ENCODE measurements at regions of chr13 and their contacts with region 1.

Region 1: GRCh38 chr13:112873851-112874750 is 94.9 kb upstream of the MCF2L start:
- DNase-seq: peak; percentile 73 to 75 (median 74)
- ATAC-seq: peak; percentile 99
- H3K4me3 ChIP-seq: no peak overlapping the region
- H3K27ac ChIP-seq: no peak overlapping the region
- H3K4me1 ChIP-seq: peaks cover 0 to 19% of the 10 kb centered on the region in 2 experiments; a peak in 2 of 5 replicates
- H3K27me3 ChIP-seq: no peaks in the 10 kb centered on the region
- CTCF ChIP-seq: peak; percentile 78 to 84 (median 82)
- EP300 ChIP-seq: no peak
- POLR2A ChIP-seq: no peak
- RAD21 ChIP-seq: peak; percentile 64 to 78

Region 2: GRCh38 chr13:112443995-112444860 is 429.9 kb before region 1 on chr13:
- CTCF ChIA-PET with region 1: no interaction called
- POLR2A ChIA-PET with region 1: no interaction called
- in situ Hi-C with region 1: no loop called
- intact Hi-C with region 1: loop called (anchors 5 kb)
- DNase-seq: peak; percentile 65 to 70 (median 70)
- ATAC-seq: peak; percentile 95
- H3K4me3 ChIP-seq: no peak overlapping the region
- H3K27ac ChIP-seq: no peak overlapping the region
- H3K4me1 ChIP-seq: peaks cover 0 to 7% of the 10 kb centered on the region in 2 experiments; a peak in 1 of 5 replicates
- H3K27me3 ChIP-seq: peaks cover 17 to 49% of the 10 kb centered on the region in 2 experiments; a peak in 4 of 5 replicates
- CTCF ChIP-seq: peak; percentile 84 to 87 (median 85)
- EP300 ChIP-seq: no peak
- POLR2A ChIP-seq: no peak
- RAD21 ChIP-seq: peak; percentile 66 to 84

Region 3: GRCh38 chr13:112616586-112617362 is 257.3 kb before region 1 on chr13:
- CTCF ChIA-PET with region 1: no interaction called
- POLR2A ChIA-PET with region 1: interaction called, 3 read pairs
- in situ Hi-C with region 1: no loop called
- intact Hi-C with region 1: loop called (anchors 5 kb)
- DNase-seq: peak; percentile 34 to 60 (median 58)
- ATAC-seq: peak; percentile 90
- H3K4me3 ChIP-seq: no peak overlapping the region
- H3K27ac ChIP-seq: no peak overlapping the region
- H3K4me1 ChIP-seq: no peaks in the 10 kb centered on the region; a peak in 1 of 5 replicates
- H3K27me3 ChIP-seq: peaks cover 5 to 62% of the 10 kb centered on the region in 2 experiments; a peak in 4 of 5 replicates
- CTCF ChIP-seq: peak; percentile 54 to 65 (median 62)
- EP300 ChIP-seq: no peak
- POLR2A ChIP-seq: no peak
- RAD21 ChIP-seq: peak in 1 of 2 experiments; percentile 39; a peak in 2 of 4 replicates

Region 4: DNA sequence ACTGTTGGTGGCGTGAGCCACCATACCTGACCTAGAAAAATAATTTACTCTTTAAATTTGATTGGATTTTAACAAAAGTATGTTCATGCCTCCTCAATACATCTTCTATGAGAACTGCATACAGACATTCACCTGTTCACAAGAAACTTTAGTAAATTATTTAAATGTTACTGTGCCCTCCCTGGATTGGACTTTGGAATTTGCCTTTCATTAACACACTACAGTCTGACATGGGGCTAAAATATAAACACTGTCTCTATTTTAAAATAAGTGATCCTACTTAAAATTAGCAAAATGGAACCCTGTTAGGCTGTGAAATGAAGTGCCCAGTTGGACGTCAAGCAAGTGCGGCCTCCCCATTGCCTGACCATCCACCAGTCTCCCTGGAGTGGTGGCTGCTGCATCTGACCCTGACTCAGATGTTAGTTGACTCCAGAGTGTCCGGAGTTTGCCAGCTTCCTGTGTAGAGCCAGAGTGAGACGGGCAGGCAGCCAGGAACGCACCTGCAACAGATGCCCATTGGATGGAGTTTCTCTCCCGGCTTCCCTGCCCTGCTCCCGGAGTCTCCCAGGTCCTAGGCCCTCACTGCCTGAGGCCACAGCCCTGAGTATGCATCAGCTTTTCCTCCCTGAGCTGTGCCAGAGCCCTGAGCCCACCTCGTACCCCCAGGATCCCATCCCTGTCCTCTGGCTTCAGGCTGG is 230.2 kb before region 1 on chr13:
- CTCF ChIA-PET with region 1: interaction called, 8 read pairs
- POLR2A ChIA-PET with region 1: no interaction called
- in situ Hi-C with region 1: loop called (anchors 10 kb)
- intact Hi-C with region 1: loop called (anchors 2 kb)
- DNase-seq: no peak
- ATAC-seq: no peak
- H3K4me3 ChIP-seq: no peak overlapping the region
- H3K27ac ChIP-seq: no peak overlapping the region
- H3K4me1 ChIP-seq: peaks cover 2 to 10% of the 10 kb centered on the region in 2 experiments; a peak in 4 of 5 replicates
- H3K27me3 ChIP-seq: peaks cover 9 to 54% of the 10 kb centered on the region in 2 experiments; a peak in 4 of 5 replicates
- CTCF ChIP-seq: no peak
- EP300 ChIP-seq: no peak
- POLR2A ChIP-seq: no peak
- RAD21 ChIP-seq: no peak

Region 5: DNA sequence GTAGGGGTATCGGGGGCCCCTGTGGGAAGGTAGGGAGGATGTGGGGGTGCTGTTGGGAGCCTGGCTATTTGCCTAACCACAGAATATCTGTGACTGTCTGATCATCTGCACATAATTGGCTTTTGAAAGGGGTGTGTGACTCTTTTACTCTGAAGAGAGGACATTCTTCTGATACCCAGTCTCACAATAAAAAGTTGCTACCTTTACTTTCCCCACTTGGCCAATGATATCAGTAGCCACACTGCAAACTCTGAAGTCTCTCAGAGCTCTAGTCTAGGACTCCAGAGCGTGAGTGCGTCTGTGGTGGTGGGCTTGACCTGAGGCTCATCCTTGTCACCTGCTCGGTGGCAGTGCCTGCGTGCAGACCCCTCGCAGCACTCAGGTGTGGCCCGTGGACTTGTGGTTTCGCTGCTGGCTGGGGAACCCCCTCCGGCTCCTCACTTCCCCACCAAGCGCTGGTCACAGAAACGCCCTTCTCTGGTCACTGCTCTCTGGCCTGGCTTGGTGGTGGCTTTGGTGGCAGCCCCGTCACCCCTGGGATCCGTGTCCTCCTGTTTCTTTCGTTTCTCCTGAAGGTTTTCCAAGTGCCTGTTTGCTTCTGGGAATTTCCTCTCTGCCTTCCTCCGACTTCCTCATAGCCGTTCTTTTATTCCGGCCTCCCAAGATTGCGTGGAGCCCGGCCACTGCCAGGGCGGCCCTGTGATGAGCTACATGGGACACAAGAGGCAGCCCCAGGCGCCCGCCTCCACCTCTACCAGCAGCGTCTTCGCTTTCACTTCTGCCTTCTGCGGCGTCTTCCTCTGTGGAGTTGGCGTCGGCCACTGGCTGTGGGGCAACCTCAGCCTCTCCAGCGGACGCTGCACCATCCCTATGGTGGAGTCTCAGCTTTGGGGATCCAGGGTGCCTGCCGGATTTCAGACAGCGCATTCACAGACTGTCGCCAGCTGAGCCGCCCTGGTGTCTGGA is 106.3 kb before region 1 on chr13:
- CTCF ChIA-PET with region 1: no interaction called
- POLR2A ChIA-PET with region 1: no interaction called
- in situ Hi-C with region 1: no loop called
- intact Hi-C with region 1: no loop called
- DNase-seq: no peak
- ATAC-seq: no peak
- H3K4me3 ChIP-seq: no peak overlapping the region
- H3K27ac ChIP-seq: no peak overlapping the region
- H3K4me1 ChIP-seq: peaks cover 3 to 24% of the 10 kb centered on the region in 2 experiments; a peak in 3 of 5 replicates
- H3K27me3 ChIP-seq: no peaks in the 10 kb centered on the region
- CTCF ChIP-seq: no peak
- EP300 ChIP-seq: no peak
- POLR2A ChIP-seq: no peak
- RAD21 ChIP-seq: no peak

Region 6: GRCh38 chr13:113483504-113484293 is 609.6 kb after region 1 on chr13:
- CTCF ChIA-PET with region 1: no interaction called
- POLR2A ChIA-PET with region 1: no interaction called
- in situ Hi-C with region 1: no loop called
- intact Hi-C with region 1: no loop called
- DNase-seq: no peak
- ATAC-seq: no peak
- H3K4me3 ChIP-seq: no peak overlapping the region
- H3K27ac ChIP-seq: no peak overlapping the region
- H3K4me1 ChIP-seq: peaks cover 5 to 9% of the 10 kb centered on the region in 2 experiments; a peak in 4 of 5 replicates
- H3K27me3 ChIP-seq: no peaks in the 10 kb centered on the region
- CTCF ChIP-seq: no peak
- EP300 ChIP-seq: no peak
- POLR2A ChIP-seq: no peak
- RAD21 ChIP-seq: no peak

Region 7: GRCh38 chr13:113758651-113759524 is 884.8 kb after region 1 on chr13 and contains the start of gene TMEM255B:
- CTCF ChIA-PET with region 1: no interaction called
- POLR2A ChIA-PET with region 1: no interaction called
- in situ Hi-C with region 1: no loop called
- intact Hi-C with region 1: no loop called
- DNase-seq: peak; percentile 72 to 92 (median 90)
- ATAC-seq: peak; percentile 99
- H3K4me3 ChIP-seq: peak within 1 kb of the TSS; percentile 46
- H3K27ac ChIP-seq: no peak within 1 kb of the TSS
- H3K4me1 ChIP-seq: peaks cover 3 to 14% of the 10 kb centered on the region in 2 experiments; a peak in 4 of 5 replicates
- H3K27me3 ChIP-seq: peaks cover 21 to 53% of the 10 kb centered on the region in 2 experiments
- CTCF ChIP-seq: peak in 1 of 3 experiments; percentile 21; a peak in 1 of 6 replicates
- EP300 ChIP-seq: no peak
- POLR2A ChIP-seq: no peak
- RAD21 ChIP-seq: no peak
- polyA plus RNA-seq, gene TMEM255B: 0.01 to 0.04 TPM